K562 (cell line): ENCODE measurements at regions of chr2 and their contacts with region 1.

Region 1: DNA sequence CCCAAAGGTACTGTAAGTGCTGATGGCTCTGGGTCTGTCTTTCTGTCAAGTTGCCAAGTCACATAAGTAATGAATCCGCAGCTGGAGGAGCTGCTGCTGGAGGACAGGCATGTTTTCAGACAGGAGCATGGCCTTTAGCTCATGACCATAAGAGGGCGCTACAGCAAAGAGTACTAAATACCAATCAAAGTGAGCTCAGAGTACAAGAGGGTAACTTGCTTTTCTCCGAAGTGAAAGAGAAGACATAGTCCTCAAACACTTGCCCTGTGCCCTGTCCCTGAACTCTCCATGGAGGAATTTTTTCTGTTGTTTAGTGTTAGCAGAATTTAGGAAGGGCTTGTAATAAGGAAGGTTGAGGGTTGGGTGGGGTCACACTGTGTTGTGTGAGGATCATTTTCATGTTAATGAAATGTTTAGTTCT is 58.0 kb upstream of the EML6 start:
- DNase-seq: peak; percentile 31 to 76 (median 41)
- ATAC-seq: peak; percentile 93
- H3K4me3 ChIP-seq: no peak overlapping the region
- H3K27ac ChIP-seq: no peak overlapping the region
- H3K4me1 ChIP-seq: peaks cover 0 to 2% of the 10 kb centered on the region in 2 experiments; a peak in 1 of 5 replicates
- H3K27me3 ChIP-seq: no peaks in the 10 kb centered on the region
- CTCF ChIP-seq: peak; percentile 61 to 75 (median 75); a peak in 5 of 6 replicates
- EP300 ChIP-seq: no peak
- POLR2A ChIP-seq: no peak
- RAD21 ChIP-seq: peak; percentile 41 to 62

Region 2: DNA sequence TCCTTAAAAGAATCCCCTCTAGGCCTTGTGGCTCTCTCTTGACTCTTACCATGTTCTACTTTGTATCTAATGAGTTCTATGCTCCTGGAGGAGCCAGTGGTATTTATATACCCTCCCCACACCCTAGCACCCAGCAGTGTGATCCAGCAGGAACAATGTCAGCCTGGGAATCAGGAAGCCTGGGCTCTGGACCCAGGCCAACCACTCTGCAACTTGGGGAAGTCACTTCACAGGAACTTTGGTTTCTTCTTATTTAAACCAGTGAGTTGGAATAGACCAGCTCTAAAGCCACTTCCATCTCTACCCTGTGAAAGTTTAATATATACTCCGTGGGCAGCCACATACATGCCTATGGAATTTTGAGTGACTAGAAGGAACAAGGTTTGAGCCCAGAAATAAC is 220.9 kb before region 1 on chr2:
- CTCF ChIA-PET with region 1: no interaction called
- POLR2A ChIA-PET with region 1: no interaction called
- in situ Hi-C with region 1: no loop called
- intact Hi-C with region 1: no loop called
- DNase-seq: no peak
- ATAC-seq: no peak
- H3K4me3 ChIP-seq: no peak overlapping the region
- H3K27ac ChIP-seq: no peak overlapping the region
- H3K4me1 ChIP-seq: no peaks in the 10 kb centered on the region
- H3K27me3 ChIP-seq: peaks cover 4 to 8% of the 10 kb centered on the region in 2 experiments; a peak in 2 of 5 replicates
- CTCF ChIP-seq: no peak
- EP300 ChIP-seq: no peak
- POLR2A ChIP-seq: no peak
- RAD21 ChIP-seq: no peak

Region 3: DNA sequence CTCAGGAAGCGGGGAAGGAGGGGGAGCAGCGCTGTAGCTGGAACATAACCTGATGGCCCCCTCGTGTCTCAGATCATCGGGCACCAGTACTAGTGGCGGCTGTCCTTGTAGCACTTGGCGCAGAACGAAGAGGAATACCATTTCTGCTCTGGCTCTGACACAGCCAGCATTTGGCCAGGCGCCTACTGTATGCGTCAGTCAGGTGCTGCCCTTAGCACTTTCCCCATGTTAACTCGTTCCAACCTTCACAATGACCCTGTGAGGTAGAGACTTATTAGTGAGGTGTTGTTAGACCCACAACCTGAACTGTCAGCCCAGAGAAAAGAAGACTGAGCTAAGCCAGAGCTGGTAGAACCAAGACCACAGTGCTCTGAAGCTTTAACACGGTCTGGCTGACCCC is 10.3 kb after region 1 on chr2:
- CTCF ChIA-PET with region 1: no interaction called
- POLR2A ChIA-PET with region 1: interaction called, 20 read pairs
- in situ Hi-C with region 1: no loop called
- intact Hi-C with region 1: no loop called
- DNase-seq: no peak
- ATAC-seq: no peak
- H3K4me3 ChIP-seq: no peak overlapping the region
- H3K27ac ChIP-seq: no peak overlapping the region
- H3K4me1 ChIP-seq: peaks cover 0 to 4% of the 10 kb centered on the region in 2 experiments; a peak in 1 of 5 replicates
- H3K27me3 ChIP-seq: peaks cover 17 to 58% of the 10 kb centered on the region in 2 experiments
- CTCF ChIP-seq: no peak
- EP300 ChIP-seq: no peak
- POLR2A ChIP-seq: no peak
- RAD21 ChIP-seq: no peak